ENCODE measurements at regions of chr9 and their contacts with region 1.

Region 1: GRCh38 chr9:115022760-115023434 is 92.5 kb upstream of the TNFSF8 start:
- DNase-seq: no peak
- H3K4me3 ChIP-seq: no peak overlapping the region
- H3K27ac ChIP-seq: peak overlapping the region in 3 of 4 donors; percentile 52 to 90 (median 90)
- H3K4me1 ChIP-seq: peaks cover 0 to 65% (median 28%) of the 10 kb centered on the region in 4 donors
- H3K27me3 ChIP-seq: no peaks in the 10 kb centered on the region
- CTCF ChIP-seq: no peak
- EP300 ChIP-seq: no peak
- POLR2A ChIP-seq: no peak

Region 2: GRCh38 chr9:114958021-114958843 is 64.7 kb before region 1 on chr9:
- intact Hi-C with region 1: no loop called
- DNase-seq: peak; percentile 68
- H3K4me3 ChIP-seq: no peak overlapping the region
- H3K27ac ChIP-seq: peak overlapping the region in 1 of 4 donors; percentile 56
- H3K4me1 ChIP-seq: peaks cover 0 to 9% (median 0%) of the 10 kb centered on the region in 4 donors
- H3K27me3 ChIP-seq: no peaks in the 10 kb centered on the region
- CTCF ChIP-seq: no peak
- EP300 ChIP-seq: no peak
- POLR2A ChIP-seq: no peak

Region 3: GRCh38 chr9:115063058-115063845 is 40.4 kb after region 1 on chr9:
- intact Hi-C with region 1: loop called (anchors 5 kb)
- DNase-seq: no peak
- H3K4me3 ChIP-seq: no peak overlapping the region
- H3K27ac ChIP-seq: peak overlapping the region; percentile 84 to 91 (median 86)
- H3K4me1 ChIP-seq: peaks cover 0 to 94% (median 74%) of the 10 kb centered on the region in 4 donors
- H3K27me3 ChIP-seq: no peaks in the 10 kb centered on the region
- CTCF ChIP-seq: no peak
- EP300 ChIP-seq: peak in 3 of 4 donors; percentile 31 to 60 (median 58)
- POLR2A ChIP-seq: no peak

Region 4: DNA sequence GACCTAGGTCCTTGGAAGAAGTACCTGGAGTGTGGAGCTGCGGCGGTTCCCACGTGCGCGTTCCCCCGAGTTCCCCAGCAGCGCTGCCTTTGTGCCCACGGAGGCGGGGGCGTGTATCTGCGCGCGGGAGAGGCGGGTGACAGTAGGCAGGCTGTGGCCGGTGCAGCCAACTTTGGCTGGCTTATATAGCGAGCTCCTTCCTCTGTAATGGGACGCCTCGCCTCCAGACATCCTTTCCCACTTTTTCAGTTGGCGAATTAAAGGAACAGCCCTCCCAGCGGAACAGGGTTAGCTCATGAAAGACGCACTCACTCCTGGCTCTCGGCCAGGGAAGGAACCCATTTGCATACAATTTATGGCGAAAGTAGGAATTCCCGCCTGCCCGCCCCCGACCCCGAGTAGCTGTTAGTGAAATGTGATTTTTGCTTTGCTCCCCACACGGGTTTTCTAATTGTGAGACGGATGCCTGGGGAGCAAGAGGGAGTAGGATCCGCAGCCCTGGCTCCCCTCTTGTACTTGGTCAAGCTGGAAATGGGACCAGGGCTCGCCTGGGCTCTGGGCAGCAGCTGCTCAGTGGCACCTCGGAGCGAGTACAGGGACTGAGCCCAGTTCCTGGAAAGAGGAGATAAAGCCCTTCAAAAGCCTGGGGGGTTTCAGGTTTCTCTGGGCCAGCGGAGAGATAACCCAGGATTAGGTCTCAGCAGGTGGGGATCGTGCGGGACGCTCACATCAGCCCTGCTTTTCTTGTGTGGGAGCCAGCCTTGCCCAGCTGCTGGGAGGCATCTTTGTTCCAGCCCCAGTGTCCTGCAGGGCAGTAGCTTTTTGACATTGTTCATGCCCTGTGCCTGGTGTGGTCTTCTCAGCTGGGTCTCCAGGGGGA is 95.3 kb after region 1 on chr9 and contains the start of gene TNC:
- intact Hi-C with region 1: loop called (anchors 5 kb)
- DNase-seq: peak; percentile 94
- H3K4me3 ChIP-seq: peak within 1 kb of the TSS; percentile 28 to 61 (median 56)
- H3K27ac ChIP-seq: peak within 1 kb of the TSS; percentile 88 to 97 (median 96)
- H3K4me1 ChIP-seq: peaks cover 0 to 49% (median 42%) of the 10 kb centered on the region in 4 donors
- H3K27me3 ChIP-seq: no peaks in the 10 kb centered on the region
- CTCF ChIP-seq: no peak
- EP300 ChIP-seq: peak in 2 of 4 donors; percentile 63 to 85
- POLR2A ChIP-seq: peak; percentile 63 to 93
- total RNA-seq, gene TNC: 127 to 742 (median 590) TPM

Measured in sigmoid colon (tissue), 7 donors.